ENCODE measurements at regions of chr4 and their contacts with region 1.

Region 1: DNA sequence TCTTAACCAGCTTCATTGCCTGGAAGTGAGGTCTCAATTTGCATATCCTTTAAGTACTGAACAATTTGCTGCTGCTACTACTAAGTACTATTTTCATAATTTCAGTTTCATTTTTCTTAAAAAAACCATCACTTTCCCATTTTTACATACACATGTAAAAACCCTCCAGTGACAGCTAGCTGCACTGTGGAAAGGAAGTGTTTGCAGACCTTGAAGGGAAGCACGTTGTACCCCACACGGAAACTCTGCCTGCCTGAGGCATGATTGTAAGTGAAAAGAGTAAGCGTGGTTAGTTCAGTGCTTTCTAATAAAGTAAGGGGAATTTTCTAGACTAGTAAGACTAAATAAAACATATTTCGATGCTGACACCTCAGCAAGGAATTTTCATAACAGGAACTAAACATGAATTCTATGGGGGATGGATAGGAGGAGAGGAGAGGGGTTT is 103.6 kb downstream of the RAPGEF2 start:
- DNase-seq: peak; percentile 35
- ATAC-seq: peak; percentile 41
- H3K4me3 ChIP-seq: peak overlapping the region in 1 of 5 experiments; percentile 47
- H3K4me3 Mint-ChIP-seq: peak overlapping the region; percentile 14
- H3K27ac ChIP-seq: no peak overlapping the region
- H3K27ac Mint-ChIP-seq: no peak overlapping the region
- H3K4me1 ChIP-seq: peaks cover 13 to 14% of the 10 kb centered on the region in 2 donors
- H3K4me1 Mint-ChIP-seq: peaks cover 16% of the 10 kb centered on the region
- H3K27me3 ChIP-seq: no peaks in the 10 kb centered on the region
- H3K27me3 Mint-ChIP-seq: no peaks in the 10 kb centered on the region
- CTCF ChIP-seq: no peak

Region 2: DNA sequence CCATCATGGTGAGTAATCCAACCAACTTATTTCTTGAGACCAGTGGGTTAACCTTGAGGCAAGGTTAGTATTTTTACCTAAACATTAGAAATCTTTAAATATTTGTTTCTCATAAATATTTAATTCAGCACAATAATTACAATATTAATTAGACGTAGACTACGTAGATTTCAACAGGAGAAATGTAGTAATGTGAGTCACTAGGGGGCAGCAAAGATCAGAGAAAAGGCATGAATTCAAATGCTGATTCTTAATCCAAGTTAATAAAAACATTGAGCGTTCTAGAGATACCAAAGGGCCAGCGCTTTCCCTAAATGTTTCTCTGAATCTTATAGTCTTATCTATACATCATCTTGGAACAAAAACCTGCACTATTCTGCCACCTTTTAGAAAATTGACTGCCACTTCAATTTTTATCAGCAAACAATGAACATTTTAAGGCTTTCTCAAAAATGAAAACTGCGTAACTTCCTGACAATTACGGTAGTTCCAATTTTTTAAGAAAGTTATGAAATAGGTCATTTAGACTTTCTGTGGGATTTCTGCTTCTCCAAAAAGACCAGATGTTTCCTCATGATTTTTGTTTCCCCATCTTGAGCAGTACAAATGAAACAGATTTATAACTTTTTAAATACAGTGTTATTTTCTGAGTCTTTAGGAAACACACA is 1214.3 kb before region 1 on chr4:
- CTCF ChIA-PET with region 1: no interaction called
- POLR2A ChIA-PET with region 1: no interaction called
- intact Hi-C with region 1: loop called (anchors 2 kb)
- DNase-seq: peak; percentile 39
- ATAC-seq: no peak
- H3K4me3 ChIP-seq: no peak overlapping the region
- H3K4me3 Mint-ChIP-seq: no peak overlapping the region
- H3K27ac ChIP-seq: no peak overlapping the region
- H3K27ac Mint-ChIP-seq: no peak overlapping the region
- H3K4me1 ChIP-seq: no peaks in the 10 kb centered on the region
- H3K4me1 Mint-ChIP-seq: no peaks in the 10 kb centered on the region
- H3K27me3 ChIP-seq: no peaks in the 10 kb centered on the region
- H3K27me3 Mint-ChIP-seq: no peaks in the 10 kb centered on the region
- CTCF ChIP-seq: peak; percentile 80

Region 3: GRCh38 chr4:158729716-158730559 is 476.5 kb before region 1 on chr4:
- CTCF ChIA-PET with region 1: interaction called, 4 read pairs
- POLR2A ChIA-PET with region 1: no interaction called
- intact Hi-C with region 1: loop called (anchors 1 kb)
- DNase-seq: peak; percentile 58
- ATAC-seq: no peak
- H3K4me3 ChIP-seq: no peak overlapping the region
- H3K4me3 Mint-ChIP-seq: no peak overlapping the region
- H3K27ac ChIP-seq: no peak overlapping the region
- H3K27ac Mint-ChIP-seq: no peak overlapping the region
- H3K4me1 ChIP-seq: no peaks in the 10 kb centered on the region
- H3K4me1 Mint-ChIP-seq: no peaks in the 10 kb centered on the region
- H3K27me3 ChIP-seq: peaks cover 0 to 37% (median 30%) of the 10 kb centered on the region in 4 experiments
- H3K27me3 Mint-ChIP-seq: peaks cover 64% of the 10 kb centered on the region
- CTCF ChIP-seq: peak; percentile 74

Region 4: DNA sequence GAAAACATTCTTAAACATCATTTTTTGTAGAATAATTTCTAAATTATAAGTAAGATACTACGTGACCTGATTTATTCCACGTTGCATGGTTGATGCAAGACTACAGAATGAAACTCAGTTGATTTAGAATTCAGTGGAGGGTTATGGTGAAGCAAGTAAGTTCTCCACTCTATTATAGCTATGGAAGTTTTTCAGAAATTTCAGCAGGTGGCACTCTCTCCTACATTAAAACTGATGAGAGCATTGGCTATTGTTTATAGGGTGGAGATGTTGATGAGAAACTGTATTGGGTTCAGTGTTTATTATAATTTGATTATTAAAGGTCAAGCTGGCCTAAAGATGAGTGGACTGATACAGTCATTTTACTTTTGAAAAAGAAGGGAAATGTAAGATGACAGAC is 349.6 kb before region 1 on chr4:
- CTCF ChIA-PET with region 1: interaction called, 96 read pairs
- POLR2A ChIA-PET with region 1: no interaction called
- intact Hi-C with region 1: loop called (anchors 1 kb)
- DNase-seq: peak; percentile 63
- ATAC-seq: peak; percentile 65
- H3K4me3 ChIP-seq: no peak overlapping the region
- H3K4me3 Mint-ChIP-seq: no peak overlapping the region
- H3K27ac ChIP-seq: no peak overlapping the region
- H3K27ac Mint-ChIP-seq: no peak overlapping the region
- H3K4me1 ChIP-seq: no peaks in the 10 kb centered on the region
- H3K4me1 Mint-ChIP-seq: peaks cover 3% of the 10 kb centered on the region
- H3K27me3 ChIP-seq: peaks cover 0 to 4% (median 3%) of the 10 kb centered on the region in 4 experiments
- H3K27me3 Mint-ChIP-seq: peaks cover 13% of the 10 kb centered on the region
- CTCF ChIP-seq: peak; percentile 76

Region 5: GRCh38 chr4:159117968-159118367 is 88.5 kb before region 1 on chr4:
- CTCF ChIA-PET with region 1: no interaction called
- POLR2A ChIA-PET with region 1: no interaction called
- intact Hi-C with region 1: no loop called
- DNase-seq: no peak
- ATAC-seq: no peak
- H3K4me3 ChIP-seq: no peak overlapping the region
- H3K4me3 Mint-ChIP-seq: no peak overlapping the region
- H3K27ac ChIP-seq: no peak overlapping the region
- H3K27ac Mint-ChIP-seq: no peak overlapping the region
- H3K4me1 ChIP-seq: peaks cover under 1 to 5% of the 10 kb centered on the region in 2 donors
- H3K4me1 Mint-ChIP-seq: peaks cover 22% of the 10 kb centered on the region
- H3K27me3 ChIP-seq: no peaks in the 10 kb centered on the region
- H3K27me3 Mint-ChIP-seq: no peaks in the 10 kb centered on the region
- CTCF ChIP-seq: no peak

Region 6: GRCh38 chr4:159191989-159192388 is 14.5 kb before region 1 on chr4:
- CTCF ChIA-PET with region 1: interaction called, 24 read pairs
- POLR2A ChIA-PET with region 1: no interaction called
- intact Hi-C with region 1: no loop called
- DNase-seq: no peak
- ATAC-seq: no peak
- H3K4me3 ChIP-seq: no peak overlapping the region
- H3K4me3 Mint-ChIP-seq: no peak overlapping the region
- H3K27ac ChIP-seq: no peak overlapping the region
- H3K27ac Mint-ChIP-seq: no peak overlapping the region
- H3K4me1 ChIP-seq: no peaks in the 10 kb centered on the region
- H3K4me1 Mint-ChIP-seq: no peaks in the 10 kb centered on the region
- H3K27me3 ChIP-seq: no peaks in the 10 kb centered on the region
- H3K27me3 Mint-ChIP-seq: no peaks in the 10 kb centered on the region
- CTCF ChIP-seq: no peak

Measured in B cell (primary cell).